ENCODE measurements at regions of chr10 and their contacts with region 1.

Region 1: DNA sequence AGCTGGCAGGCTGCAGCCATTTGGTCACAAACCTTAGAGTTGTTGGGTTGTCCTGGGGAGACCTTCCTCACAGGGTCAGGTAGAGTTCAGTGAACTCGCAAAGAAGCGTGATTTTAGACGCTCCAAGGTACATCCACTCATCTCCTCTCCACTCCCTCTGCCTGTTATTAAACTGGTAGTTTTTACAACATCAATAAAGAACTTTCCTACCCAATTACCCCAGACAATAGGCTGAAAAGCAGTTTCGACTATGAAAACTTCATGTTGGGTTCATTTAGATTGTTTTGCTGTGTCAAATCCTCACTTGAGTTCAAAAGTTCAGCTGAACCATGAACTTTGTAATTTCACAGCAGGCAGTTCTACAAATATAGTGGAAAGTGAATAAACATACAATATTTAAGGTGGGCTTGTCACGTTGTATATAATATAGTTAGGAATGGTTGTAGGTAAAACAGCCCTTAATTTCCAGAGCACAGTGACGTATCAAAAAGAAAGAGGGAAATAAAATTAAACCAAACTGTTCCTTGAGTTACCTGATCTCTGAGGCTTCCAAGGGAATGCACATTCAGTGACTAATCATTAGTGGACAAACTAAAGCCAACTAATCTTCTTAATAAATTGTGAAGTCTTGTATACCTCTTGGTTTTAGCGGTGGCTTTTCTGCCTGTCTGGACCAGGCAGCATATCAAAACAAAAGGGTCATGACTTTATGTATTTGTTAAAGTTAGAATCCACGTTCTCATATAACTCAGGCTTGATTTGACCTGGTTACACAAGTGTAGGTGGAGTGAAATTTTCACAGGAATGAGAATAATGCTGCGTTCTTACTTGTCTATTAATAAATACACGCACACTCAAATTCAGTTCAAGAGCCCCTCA is 100.5 kb downstream of the CYP26A1 start:
- DNase-seq: no peak
- H3K4me3 ChIP-seq: no peak overlapping the region
- H3K27ac ChIP-seq: no peak overlapping the region
- H3K4me1 ChIP-seq: no peaks in the 10 kb centered on the region
- H3K27me3 ChIP-seq: no peaks in the 10 kb centered on the region
- CTCF ChIP-seq: no peak

Region 2: GRCh38 chr10:93106631-93107072 is 67.6 kb before region 1 on chr10:
- CTCF ChIA-PET with region 1: no interaction called
- dilution Hi-C with region 1: loop called (anchors 10 kb)
- in situ Hi-C with region 1: no loop called
- intact Hi-C with region 1: no loop called
- DNase-seq: no peak
- H3K4me3 ChIP-seq: no peak overlapping the region
- H3K27ac ChIP-seq: no peak overlapping the region
- H3K4me1 ChIP-seq: no peaks in the 10 kb centered on the region
- H3K27me3 ChIP-seq: no peaks in the 10 kb centered on the region
- CTCF ChIP-seq: no peak